H1 (cell line): ENCODE measurements at regions of chr12 and their contacts with region 1.

Region 1: DNA sequence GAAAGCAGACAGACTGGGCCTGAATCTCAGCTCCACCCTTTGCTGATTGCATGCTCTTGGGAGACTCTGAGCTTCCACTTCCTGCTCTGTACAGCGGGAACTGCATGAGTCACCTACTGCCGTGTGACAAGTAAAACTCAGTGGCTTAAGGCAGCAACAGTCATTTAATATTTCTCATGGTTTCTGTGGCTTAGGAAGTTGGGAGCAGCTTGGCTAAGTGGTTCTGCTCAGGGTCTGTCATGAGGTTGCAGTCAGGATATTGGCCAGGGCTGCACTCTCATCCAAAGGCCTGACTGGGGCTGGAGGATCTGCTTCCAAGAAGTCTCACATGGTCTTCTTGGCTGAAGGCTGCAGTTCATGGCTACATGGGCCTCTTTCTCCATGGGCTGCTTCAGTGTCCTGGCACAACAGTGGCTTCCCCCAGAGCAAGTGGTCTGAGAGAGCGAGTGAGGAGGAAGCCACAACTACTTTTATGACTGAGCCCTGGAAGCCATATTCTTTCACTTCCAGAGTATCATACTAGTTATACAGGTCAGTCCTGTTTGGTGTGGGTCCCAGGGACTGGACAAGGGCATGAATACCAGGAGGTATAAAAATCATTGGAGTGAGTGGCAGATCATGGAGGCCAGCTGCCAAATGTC is 49.7 kb downstream of the FAM222A start:
- DNase-seq: peak in 1 of 2 experiments; percentile 35
- H3K4me3 ChIP-seq: no peak overlapping the region
- H3K27ac ChIP-seq: no peak overlapping the region
- H3K4me1 ChIP-seq: peaks cover 0 to 10% (median 4%) of the 10 kb centered on the region in 4 experiments; a peak in 6 of 7 replicates
- H3K27me3 ChIP-seq: no peaks in the 10 kb centered on the region
- CTCF ChIP-seq: no peak
- EP300 ChIP-seq: no peak
- POLR2A ChIP-seq: no peak
- RAD21 ChIP-seq: no peak

Region 2: GRCh38 chr12:109680264-109681005 is 82.9 kb before region 1 on chr12:
- CTCF ChIA-PET with region 1: no interaction called
- POLR2A ChIA-PET with region 1: no interaction called
- DNase-seq: no peak
- H3K4me3 ChIP-seq: no peak overlapping the region
- H3K27ac ChIP-seq: no peak overlapping the region
- H3K4me1 ChIP-seq: peaks cover 0 to 8% (median 4%) of the 10 kb centered on the region in 4 experiments; a peak in 4 of 7 replicates
- H3K27me3 ChIP-seq: peaks cover 0 to 7% (median under 1%) of the 10 kb centered on the region in 4 experiments; a peak in 4 of 7 replicates
- CTCF ChIP-seq: no peak
- EP300 ChIP-seq: no peak
- POLR2A ChIP-seq: no peak
- RAD21 ChIP-seq: no peak

Region 3: DNA sequence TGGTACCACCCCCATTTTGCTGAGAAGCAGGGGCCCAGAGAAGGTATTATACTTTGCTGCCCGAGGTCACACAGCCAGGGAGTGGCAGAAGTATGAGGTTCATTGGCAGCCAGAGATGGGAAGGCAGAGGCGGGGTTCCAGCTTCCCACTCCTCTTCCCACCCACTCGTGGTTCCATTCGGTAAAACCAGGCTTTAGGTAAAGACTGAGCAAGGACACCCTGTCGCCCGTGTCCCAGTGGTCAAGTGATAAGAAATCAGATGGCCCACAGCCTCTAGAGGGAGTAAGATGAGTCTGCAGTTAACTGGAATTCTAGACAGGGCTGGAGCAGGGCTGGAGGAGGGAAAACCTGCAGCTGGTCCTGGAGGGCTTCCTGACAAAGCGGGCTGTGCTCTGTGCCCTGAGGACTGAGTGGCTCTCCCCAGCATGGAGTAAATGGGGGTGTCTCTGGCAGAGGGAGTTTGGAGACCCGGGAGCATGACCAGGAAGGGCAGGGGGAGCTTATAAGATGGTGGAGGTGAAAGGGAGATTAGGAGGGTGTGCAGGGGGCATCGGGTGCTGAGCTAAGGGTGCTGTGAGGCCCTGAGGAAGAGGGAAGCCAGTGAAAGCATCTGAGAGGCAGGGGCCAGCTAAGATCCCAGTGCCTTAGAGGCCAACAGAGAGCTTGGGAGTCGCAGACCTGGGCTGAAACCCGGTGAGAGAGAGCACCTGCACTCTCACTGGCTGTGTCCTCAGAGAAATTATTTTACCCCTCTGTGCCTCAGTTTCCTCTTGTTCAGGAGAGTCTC is 43.9 kb before region 1 on chr12:
- CTCF ChIA-PET with region 1: interaction called, 16 read pairs
- POLR2A ChIA-PET with region 1: interaction called, 3 read pairs
- DNase-seq: no peak
- H3K4me3 ChIP-seq: no peak overlapping the region
- H3K27ac ChIP-seq: 0 out of 2 replicates have a peak overlapping the region, but pooled peaks have one; percentile 14
- H3K4me1 ChIP-seq: peaks cover 0 to 33% (median 15%) of the 10 kb centered on the region in 4 experiments; a peak in 6 of 7 replicates
- H3K27me3 ChIP-seq: peaks cover 4 to 40% (median 39%) of the 10 kb centered on the region in 4 experiments
- CTCF ChIP-seq: peak in 2 of 3 experiments; percentile 51 to 62; a peak in 3 of 4 replicates
- EP300 ChIP-seq: no peak
- POLR2A ChIP-seq: no peak
- RAD21 ChIP-seq: peak; percentile 30 to 57; a peak in 2 of 4 replicates

Region 4: GRCh38 chr12:109752117-109753053 is 10.9 kb before region 1 on chr12:
- CTCF ChIA-PET with region 1: interaction called, 12 read pairs
- POLR2A ChIA-PET with region 1: no interaction called
- DNase-seq: no peak
- H3K4me3 ChIP-seq: no peak overlapping the region
- H3K27ac ChIP-seq: no peak overlapping the region
- H3K4me1 ChIP-seq: no peaks in the 10 kb centered on the region; a peak in 1 of 7 replicates
- H3K27me3 ChIP-seq: no peaks in the 10 kb centered on the region
- CTCF ChIP-seq: no peak
- EP300 ChIP-seq: no peak
- POLR2A ChIP-seq: no peak
- RAD21 ChIP-seq: no peak